ENCODE measurements at regions of chr17 and their contacts with region 1.

Region 1: DNA sequence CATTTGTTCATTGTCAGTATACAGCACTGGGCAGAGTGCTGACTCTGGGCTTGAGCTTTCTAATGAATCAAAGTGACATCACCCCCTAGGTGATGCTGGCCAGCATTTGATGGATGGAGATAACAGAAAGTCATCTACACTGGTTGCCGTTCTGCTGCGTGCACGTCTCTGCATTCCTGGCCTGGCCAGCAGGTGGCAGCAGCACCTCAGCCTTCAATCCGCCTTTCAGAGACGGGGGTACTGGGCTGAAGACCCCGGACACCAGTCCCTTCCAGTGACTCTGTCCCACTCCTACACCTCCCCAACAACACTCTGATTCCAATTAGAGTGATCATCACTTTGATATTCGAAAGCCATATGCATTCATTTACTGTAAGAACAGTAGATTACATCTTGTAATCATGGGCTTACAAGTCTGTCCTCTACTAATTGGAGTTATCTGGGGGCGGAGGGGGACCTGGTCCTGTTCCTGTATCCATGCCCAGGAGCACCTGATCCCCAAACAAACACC is 6.0 kb downstream of the CPSF4L start:
- DNase-seq: no peak
- H3K4me3 ChIP-seq: no peak overlapping the region
- H3K27me3 ChIP-seq: no peaks in the 10 kb centered on the region; the same call in 1 of the 2 replicates
- CTCF ChIP-seq: peak; percentile 98

Region 2: GRCh38 chr17:73291260-73291801 is 35.6 kb after region 1 on chr17:
- CTCF ChIA-PET with region 1: interaction called, 20 read pairs
- POLR2A ChIA-PET with region 1: no interaction called
- DNase-seq: peak; percentile 83
- H3K4me3 ChIP-seq: no peak overlapping the region
- H3K27me3 ChIP-seq: no peaks in the 10 kb centered on the region
- CTCF ChIP-seq: no peak

Region 3: GRCh38 chr17:73311781-73312641 is 56.3 kb after region 1 on chr17 and contains the start of gene CDC42EP4:
- CTCF ChIA-PET with region 1: interaction called, 26 read pairs
- POLR2A ChIA-PET with region 1: no interaction called
- DNase-seq: peak; percentile 68
- H3K4me3 ChIP-seq: peak within 1 kb of the TSS; percentile 99
- H3K27me3 ChIP-seq: no peaks in the 10 kb centered on the region
- CTCF ChIP-seq: no peak
- polyA plus RNA-seq, gene CDC42EP4: 19.6 and 28.0 TPM in 2 replicates

Region 4: DNA sequence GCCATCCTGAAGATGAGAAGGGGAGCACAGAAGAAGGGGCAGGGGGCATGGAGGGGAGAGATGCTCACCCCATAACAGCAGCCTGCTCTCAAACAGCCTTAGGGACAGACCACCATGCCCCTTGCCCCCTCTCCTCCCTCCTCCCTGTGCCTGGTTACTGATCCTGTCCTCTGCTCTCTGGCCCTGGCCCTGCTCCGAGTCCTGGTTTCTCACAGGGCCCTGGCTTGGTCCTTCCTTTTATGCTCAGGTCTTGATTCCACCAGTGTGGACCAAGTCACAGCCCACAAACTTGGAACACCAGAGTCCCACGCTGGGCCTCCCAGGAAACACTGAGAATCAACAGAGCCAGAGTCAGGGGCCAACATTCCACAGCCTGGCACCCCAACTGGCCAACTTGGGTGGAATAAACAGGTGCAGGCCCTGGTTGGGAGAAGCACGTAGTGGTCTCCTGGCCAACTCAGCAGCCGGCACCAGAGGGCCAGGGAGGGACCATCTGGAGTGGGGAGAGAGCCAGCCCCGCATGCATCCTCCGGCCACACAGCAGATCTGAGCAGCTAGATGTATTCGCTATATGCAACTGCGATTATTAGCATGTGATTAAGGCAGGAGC is 100.9 kb after region 1 on chr17:
- CTCF ChIA-PET with region 1: interaction called, 427 read pairs
- POLR2A ChIA-PET with region 1: no interaction called
- DNase-seq: no peak
- H3K4me3 ChIP-seq: no peak overlapping the region
- H3K27me3 ChIP-seq: no peaks in the 10 kb centered on the region; the same call in 1 of the 2 replicates
- CTCF ChIP-seq: no peak

Region 5: DNA sequence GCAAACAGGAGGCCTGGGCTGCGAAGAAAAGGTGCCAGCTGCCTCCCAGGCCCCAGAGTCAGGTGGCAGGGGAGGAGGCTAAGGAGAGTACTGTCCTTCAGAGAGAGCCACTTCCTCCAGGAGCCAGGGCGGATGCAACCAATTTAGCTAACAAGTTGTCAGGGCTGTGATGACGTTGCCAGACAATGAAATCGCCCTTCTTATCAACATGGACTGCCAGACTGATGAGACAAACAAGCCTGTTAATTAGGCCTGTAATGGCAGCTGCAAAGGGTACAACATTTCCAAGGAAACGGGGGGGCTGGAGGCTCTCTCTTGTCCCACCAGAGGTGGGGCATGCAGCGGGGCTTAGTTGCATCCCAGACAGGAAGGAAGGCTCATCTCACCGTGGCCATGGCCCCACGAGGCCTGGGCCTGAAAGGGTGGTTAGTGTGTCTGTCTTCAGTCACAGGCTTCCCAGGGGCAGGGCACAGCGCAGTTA is 276.7 kb after region 1 on chr17:
- CTCF ChIA-PET with region 1: no interaction called
- POLR2A ChIA-PET with region 1: no interaction called
- DNase-seq: no peak
- H3K4me3 ChIP-seq: no peak overlapping the region
- H3K27me3 ChIP-seq: no peaks in the 10 kb centered on the region
- CTCF ChIP-seq: no peak

Measured in BJ (cell line).